ENCODE measurements at regions of chr16 and their contacts with region 1.

Region 1: DNA sequence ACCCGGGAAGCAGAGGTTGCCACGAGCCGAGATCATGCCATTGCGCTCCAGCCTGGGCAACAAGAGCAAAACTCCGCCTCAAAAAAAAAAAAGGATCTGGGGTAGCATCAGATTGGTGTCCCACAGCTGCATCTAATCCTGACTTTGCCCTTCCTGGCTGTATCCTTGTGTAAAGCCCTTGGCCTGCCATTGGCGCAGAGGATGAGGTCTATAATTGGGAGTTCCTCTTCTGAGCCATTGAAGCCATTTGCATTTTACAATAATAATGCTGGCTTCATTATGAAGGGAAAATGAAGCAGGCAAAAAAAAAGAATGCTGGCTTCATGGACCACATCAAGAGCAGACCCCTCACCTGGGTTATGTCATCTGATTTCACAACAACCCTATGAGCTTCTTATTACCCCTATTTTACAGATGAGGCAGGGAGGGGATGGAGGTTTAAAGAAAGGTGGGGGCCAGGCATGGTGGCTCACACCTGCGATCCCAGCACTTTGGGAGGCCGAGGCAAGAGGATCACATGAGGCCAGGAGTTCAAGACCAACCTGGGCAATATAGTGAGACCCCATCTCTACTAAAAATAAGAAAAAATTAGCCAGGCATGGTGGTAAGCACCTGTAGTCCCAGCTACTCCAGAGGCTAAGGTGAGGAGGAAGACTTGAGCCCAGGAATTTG is 1.2 kb upstream of the LITAFD start:
- DNase-seq: no peak
- H3K4me3 ChIP-seq: no peak overlapping the region
- H3K27ac ChIP-seq: no peak overlapping the region
- H3K4me1 ChIP-seq: peaks cover 0 to 12% (median 9%) of the 10 kb centered on the region in 4 donors
- H3K27me3 ChIP-seq: peaks cover 0 to 43% (median 8%) of the 10 kb centered on the region in 3 donors
- CTCF ChIP-seq: no peak
- EP300 ChIP-seq: no peak
- POLR2A ChIP-seq: no peak

Region 2: GRCh38 chr16:8567750-8568617 is 313.0 kb before region 1 on chr16:
- intact Hi-C with region 1: loop called (anchors 1 kb)
- DNase-seq: peak; percentile 82
- H3K4me3 ChIP-seq: no peak overlapping the region
- H3K27ac ChIP-seq: no peak overlapping the region
- H3K4me1 ChIP-seq: peaks cover 0 to 13% (median 0%) of the 10 kb centered on the region in 4 donors
- H3K27me3 ChIP-seq: peaks cover 0 to 15% (median 13%) of the 10 kb centered on the region in 3 donors
- CTCF ChIP-seq: peak; percentile 89 to 96 (median 96)
- EP300 ChIP-seq: no peak
- POLR2A ChIP-seq: no peak

Region 3: DNA sequence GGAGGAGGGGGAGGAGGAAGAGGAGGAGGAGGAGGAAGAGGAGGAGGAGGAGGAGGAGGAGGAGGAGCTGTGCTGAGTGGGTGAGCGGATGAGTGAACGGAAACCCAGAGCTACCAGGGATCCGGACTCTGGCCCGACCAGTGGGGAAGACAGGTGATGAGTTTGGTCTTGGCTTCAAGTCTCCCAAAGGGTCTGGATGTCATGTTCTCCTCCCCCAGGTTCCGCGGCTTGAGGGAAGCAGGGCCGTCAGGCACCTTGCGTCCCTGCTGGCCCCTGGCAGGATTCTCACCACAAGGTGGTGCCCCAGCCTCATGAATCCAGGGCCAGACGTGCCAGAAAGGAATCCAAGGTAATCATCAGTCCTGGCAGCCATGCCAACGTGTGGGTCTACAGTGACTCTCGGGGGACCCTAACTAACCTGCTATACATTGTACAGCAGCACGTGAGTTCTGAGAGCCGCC is 220.1 kb before region 1 on chr16:
- intact Hi-C with region 1: loop called (anchors 2 kb)
- DNase-seq: peak; percentile 74
- H3K4me3 ChIP-seq: no peak overlapping the region
- H3K27ac ChIP-seq: no peak overlapping the region
- H3K4me1 ChIP-seq: no peaks in the 10 kb centered on the region
- H3K27me3 ChIP-seq: no peaks in the 10 kb centered on the region
- CTCF ChIP-seq: peak; percentile 9 to 50 (median 46)
- EP300 ChIP-seq: no peak
- POLR2A ChIP-seq: no peak